Heart right ventricle (tissue), 16 donors: ENCODE measurements at regions of chr9 and their contacts with region 1.

Region 1: GRCh38 chr9:18985464-18985951 is 47.5 kb downstream of the SAXO1 start:
- DNase-seq: no peak
- ATAC-seq: no peak
- H3K4me3 ChIP-seq: no peak overlapping the region
- H3K27ac ChIP-seq: no peak overlapping the region
- H3K4me1 ChIP-seq: peaks cover 0 to 18% (median 0%) of the 10 kb centered on the region in 9 donors
- H3K27me3 ChIP-seq: no peaks in the 10 kb centered on the region
- CTCF ChIP-seq: no peak

Region 2: DNA sequence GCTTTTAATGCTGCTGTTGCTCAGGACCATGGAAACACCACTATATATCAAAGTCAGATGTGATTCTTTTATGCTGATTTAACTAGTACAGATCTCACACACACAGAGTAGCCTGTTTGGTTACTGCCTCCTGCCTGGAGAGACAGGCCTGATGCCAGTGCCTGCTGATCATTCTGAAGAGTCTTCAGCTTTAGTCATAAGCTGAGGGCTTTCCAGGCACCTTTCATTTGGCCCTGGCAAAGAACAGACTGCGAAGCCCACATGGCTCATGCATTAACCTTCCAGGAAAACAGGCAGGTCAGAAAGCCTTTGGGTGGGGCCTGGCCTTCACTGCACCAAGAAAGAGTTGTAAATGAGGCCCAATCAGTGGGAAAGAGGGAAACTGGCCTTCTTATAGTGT is 97.2 kb before region 1 on chr9:
- intact Hi-C with region 1: loop called in 1 of 10 experiments (anchors 10 kb)
- DNase-seq: peak in 1 of 2 donors; percentile 25
- ATAC-seq: peak; percentile 46 to 93 (median 82)
- H3K4me3 ChIP-seq: no peak overlapping the region
- H3K27ac ChIP-seq: no peak overlapping the region
- H3K4me1 ChIP-seq: peaks cover 0 to 6% (median 0%) of the 10 kb centered on the region in 9 donors
- H3K27me3 ChIP-seq: no peaks in the 10 kb centered on the region
- CTCF ChIP-seq: no peak

Region 3: GRCh38 chr9:18920141-18921084 is 65.1 kb before region 1 on chr9:
- intact Hi-C with region 1: loop called in 1 of 10 experiments (anchors 10 kb)
- DNase-seq: no peak
- ATAC-seq: no peak
- H3K4me3 ChIP-seq: no peak overlapping the region
- H3K27ac ChIP-seq: no peak overlapping the region
- H3K4me1 ChIP-seq: peaks cover 0 to 16% (median 8%) of the 10 kb centered on the region in 9 donors
- H3K27me3 ChIP-seq: no peaks in the 10 kb centered on the region
- CTCF ChIP-seq: no peak

Region 4: DNA sequence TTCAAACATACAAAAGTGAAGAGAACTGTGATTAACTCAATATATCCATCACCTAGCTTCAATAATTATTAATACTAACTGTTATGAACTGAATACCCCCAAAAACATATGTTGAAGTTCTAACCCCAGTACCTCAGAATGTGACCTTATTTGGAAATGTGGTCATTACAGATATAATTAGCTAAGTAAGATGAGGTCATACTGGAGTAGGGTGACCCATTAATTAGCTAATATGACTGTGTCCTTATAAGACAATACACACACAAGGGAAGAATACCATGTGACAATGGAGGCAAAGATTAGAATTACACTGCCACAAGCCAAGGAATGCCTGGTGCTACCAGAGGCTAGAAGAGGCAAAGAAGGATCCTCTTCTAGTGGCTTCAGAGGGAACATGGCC is 71.5 kb after region 1 on chr9:
- intact Hi-C with region 1: no loop called
- DNase-seq: no peak
- ATAC-seq: no peak
- H3K4me3 ChIP-seq: no peak overlapping the region
- H3K27ac ChIP-seq: no peak overlapping the region
- H3K4me1 ChIP-seq: peaks cover 0 to 27% (median 5%) of the 10 kb centered on the region in 9 donors
- H3K27me3 ChIP-seq: no peaks in the 10 kb centered on the region
- CTCF ChIP-seq: no peak